ENCODE measurements at regions of chr1 and their contacts with region 1.

Region 1: GRCh38 chr1:206982216-206982615 is 12.0 kb upstream of the FCAMR start:
- DNase-seq: peak in 3 of 5 donors; percentile 35 to 44 (median 35)
- ATAC-seq: peak; percentile 62 to 84 (median 82)
- H3K4me3 ChIP-seq: no peak overlapping the region
- H3K27ac ChIP-seq: no peak overlapping the region
- H3K4me1 ChIP-seq: peaks cover 0 to 5% (median 0%) of the 10 kb centered on the region in 12 donors
- H3K27me3 ChIP-seq: peaks cover 0 to 13% (median 0%) of the 10 kb centered on the region in 9 donors
- CTCF ChIP-seq: peak; percentile 23 to 70 (median 56)
- POLR2A ChIP-seq: no peak

Region 2: DNA sequence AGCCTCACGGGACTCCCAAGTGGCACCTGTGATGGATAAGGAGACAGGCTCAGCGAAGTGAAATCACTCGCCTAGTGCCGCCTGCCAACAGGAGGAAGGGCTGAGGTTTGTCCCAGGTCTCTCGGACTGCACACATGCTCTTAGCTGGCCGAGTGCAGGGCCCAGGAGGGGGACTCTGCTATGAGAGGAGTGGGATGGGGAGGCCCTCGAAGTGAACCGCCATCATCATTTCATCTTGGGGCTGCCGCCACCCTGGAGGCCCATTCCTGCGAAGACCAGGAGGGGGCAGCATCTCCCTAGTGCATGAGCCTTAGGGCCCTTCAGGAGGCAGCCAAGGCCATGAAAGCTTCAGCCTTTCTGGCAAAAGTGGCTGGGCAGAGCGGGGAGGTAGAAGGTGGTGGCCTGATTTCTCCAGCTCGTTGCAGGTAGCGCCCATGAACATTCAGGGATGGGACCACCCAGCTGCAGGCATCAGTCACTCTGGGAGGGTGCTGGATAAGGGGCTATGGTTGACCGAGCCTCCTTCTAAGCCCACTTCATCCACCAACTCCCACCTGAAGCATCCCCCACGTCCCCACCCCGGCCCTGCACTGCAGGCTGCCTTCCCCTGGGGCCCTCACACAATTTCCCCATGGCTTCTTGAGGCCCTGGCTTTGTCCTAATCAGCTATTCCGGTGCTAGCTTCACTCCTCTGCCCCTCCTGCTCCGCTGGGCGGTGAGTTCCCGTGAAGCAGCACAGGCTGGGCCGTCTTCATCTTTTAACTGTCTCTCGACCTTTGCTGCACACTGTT is 492.0 kb before region 1 on chr1:
- intact Hi-C with region 1: loop called in 2 of 10 experiments (anchors 10 kb)
- DNase-seq: peak; percentile 68 to 84 (median 78)
- ATAC-seq: peak; percentile 56 to 90 (median 86)
- H3K4me3 ChIP-seq: no peak overlapping the region
- H3K27ac ChIP-seq: no peak overlapping the region
- H3K4me1 ChIP-seq: peaks cover 0 to 36% (median 11%) of the 10 kb centered on the region in 12 donors
- H3K27me3 ChIP-seq: no peaks in the 10 kb centered on the region
- CTCF ChIP-seq: peak; percentile 88 to 98 (median 94)
- POLR2A ChIP-seq: no peak

Region 3: DNA sequence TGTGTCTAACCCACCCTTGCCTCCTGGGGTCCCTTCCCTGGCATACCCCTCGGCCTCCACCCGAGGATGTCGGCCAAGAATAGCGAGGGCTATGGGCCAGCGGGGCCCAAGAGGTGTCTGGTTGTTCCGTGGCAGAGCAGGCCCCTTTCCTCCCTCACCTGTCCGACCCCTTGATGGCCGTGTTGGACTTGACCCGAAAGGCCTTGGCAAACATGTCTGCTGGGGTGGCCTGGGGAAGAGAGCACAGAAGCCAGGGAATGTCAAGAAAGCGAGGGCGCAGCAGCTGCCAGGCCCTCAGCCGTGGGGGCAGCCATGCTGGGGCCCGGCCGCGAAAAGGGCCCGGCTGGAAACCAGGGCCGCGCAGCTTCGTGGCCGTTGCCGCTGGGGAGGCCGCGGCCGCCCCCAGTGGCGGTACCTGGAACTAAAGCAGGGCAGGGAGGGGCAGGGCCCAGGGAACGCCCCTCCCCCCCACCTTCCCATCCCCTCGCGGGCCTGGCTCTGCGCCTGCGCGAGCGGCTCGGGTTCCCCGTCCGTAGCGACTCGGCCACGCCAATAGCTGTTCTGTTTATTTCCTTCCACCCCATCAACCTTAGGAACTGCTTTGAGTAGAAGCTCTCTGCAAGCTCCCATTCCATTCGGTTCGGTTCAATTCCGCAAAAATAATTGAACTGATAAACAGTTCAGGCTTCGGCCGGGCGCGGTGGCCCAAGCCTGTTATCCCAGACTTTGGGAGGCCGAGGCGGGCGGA is 369.9 kb before region 1 on chr1 and contains the start of gene EIF2D:
- intact Hi-C with region 1: loop called in 5 of 10 experiments (anchors 5 to 10 kb)
- DNase-seq: peak; percentile 94 to 99 (median 96)
- ATAC-seq: peak; percentile 99
- H3K4me3 ChIP-seq: peak within 1 kb of the TSS; percentile 56 to 92 (median 78)
- H3K27ac ChIP-seq: peak within 1 kb of the TSS; percentile 63 to 90 (median 86)
- H3K4me1 ChIP-seq: peaks cover 0 to 13% (median 8%) of the 10 kb centered on the region in 12 donors
- H3K27me3 ChIP-seq: no peaks in the 10 kb centered on the region
- CTCF ChIP-seq: peak; percentile 94 to 100 (median 98)
- POLR2A ChIP-seq: peak in 1 of 2 donors; percentile 58
- total RNA-seq, gene EIF2D: 21.6 to 37.5 (median 29.0) TPM

Region 4: GRCh38 chr1:206628916-206629315 is 353.3 kb before region 1 on chr1:
- intact Hi-C with region 1: loop called in 8 of 10 experiments (anchors 5 to 10 kb)
- DNase-seq: no peak
- ATAC-seq: no peak
- H3K4me3 ChIP-seq: no peak overlapping the region
- H3K27ac ChIP-seq: no peak overlapping the region
- H3K4me1 ChIP-seq: peaks cover 0 to 14% (median 2%) of the 10 kb centered on the region in 12 donors
- H3K27me3 ChIP-seq: no peaks in the 10 kb centered on the region
- CTCF ChIP-seq: no peak
- POLR2A ChIP-seq: no peak

Measured in heart left ventricle (tissue), 16 donors.